CD4-positive, alpha-beta T cell (primary cell): ENCODE measurements at regions of chr17 and their contacts with region 1.

Region 1: DNA sequence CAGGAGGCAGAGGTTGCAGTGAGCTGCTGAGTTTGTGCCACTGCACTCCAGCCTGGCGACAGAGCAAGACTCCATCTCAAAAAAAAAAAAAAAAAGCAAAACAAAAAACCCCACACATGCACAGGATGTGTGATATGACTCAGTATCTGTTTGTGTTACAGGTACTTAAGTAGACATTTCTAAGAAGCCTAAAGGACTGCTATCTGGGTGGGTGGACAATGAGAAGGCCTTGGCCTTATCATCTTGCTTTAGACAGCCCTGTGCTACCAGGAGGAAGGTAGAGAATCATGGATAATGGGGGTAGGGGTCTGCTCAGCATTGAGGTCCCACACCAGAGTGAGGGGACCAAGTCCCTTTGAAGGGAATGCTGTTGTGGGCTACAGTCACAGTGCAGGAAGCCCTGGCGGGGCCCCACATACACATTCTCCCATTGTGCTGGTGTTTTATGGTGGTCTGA is 26.7 kb downstream of the PLD6 start:
- DNase-seq: peak in 7 of 14 experiments; percentile 22 to 74 (median 51)
- ATAC-seq: peak; percentile 50
- H3K4me3 ChIP-seq: peak overlapping the region; percentile 36
- H3K4me3 Mint-ChIP-seq: peak overlapping the region; percentile 86
- H3K27ac ChIP-seq: peak overlapping the region; percentile 77
- H3K27ac Mint-ChIP-seq: peak overlapping the region; percentile 99
- H3K4me1 ChIP-seq: peaks cover 100% of the 10 kb centered on the region
- H3K4me1 Mint-ChIP-seq: peaks cover 91% of the 10 kb centered on the region
- H3K27me3 ChIP-seq: no peaks in the 10 kb centered on the region
- H3K27me3 Mint-ChIP-seq: no peaks in the 10 kb centered on the region
- CTCF ChIP-seq: no peak

Region 2: GRCh38 chr17:17151962-17152361 is 27.4 kb before region 1 on chr17:
- CTCF ChIA-PET with region 1: no interaction called
- POLR2A ChIA-PET with region 1: interaction called, 10 read pairs
- intact Hi-C with region 1: no loop called
- DNase-seq: peak in 5 of 14 experiments; percentile 15 to 64 (median 49)
- ATAC-seq: no peak
- H3K4me3 ChIP-seq: no peak overlapping the region
- H3K4me3 Mint-ChIP-seq: no peak overlapping the region
- H3K27ac ChIP-seq: no peak overlapping the region
- H3K27ac Mint-ChIP-seq: peak overlapping the region; percentile 81
- H3K4me1 ChIP-seq: peaks cover 54% of the 10 kb centered on the region
- H3K4me1 Mint-ChIP-seq: peaks cover 48% of the 10 kb centered on the region
- H3K27me3 ChIP-seq: no peaks in the 10 kb centered on the region
- H3K27me3 Mint-ChIP-seq: no peaks in the 10 kb centered on the region
- CTCF ChIP-seq: no peak

Region 3: GRCh38 chr17:17191346-17191792 is 12.0 kb after region 1 on chr17:
- CTCF ChIA-PET with region 1: no interaction called
- POLR2A ChIA-PET with region 1: interaction called, 13 read pairs
- intact Hi-C with region 1: no loop called
- DNase-seq: no peak
- ATAC-seq: no peak
- H3K4me3 ChIP-seq: no peak overlapping the region
- H3K4me3 Mint-ChIP-seq: no peak overlapping the region
- H3K27ac ChIP-seq: no peak overlapping the region
- H3K27ac Mint-ChIP-seq: no peak overlapping the region
- H3K4me1 ChIP-seq: peaks cover 22% of the 10 kb centered on the region
- H3K4me1 Mint-ChIP-seq: peaks cover 13% of the 10 kb centered on the region
- H3K27me3 ChIP-seq: no peaks in the 10 kb centered on the region
- H3K27me3 Mint-ChIP-seq: no peaks in the 10 kb centered on the region
- CTCF ChIP-seq: no peak

Region 4: DNA sequence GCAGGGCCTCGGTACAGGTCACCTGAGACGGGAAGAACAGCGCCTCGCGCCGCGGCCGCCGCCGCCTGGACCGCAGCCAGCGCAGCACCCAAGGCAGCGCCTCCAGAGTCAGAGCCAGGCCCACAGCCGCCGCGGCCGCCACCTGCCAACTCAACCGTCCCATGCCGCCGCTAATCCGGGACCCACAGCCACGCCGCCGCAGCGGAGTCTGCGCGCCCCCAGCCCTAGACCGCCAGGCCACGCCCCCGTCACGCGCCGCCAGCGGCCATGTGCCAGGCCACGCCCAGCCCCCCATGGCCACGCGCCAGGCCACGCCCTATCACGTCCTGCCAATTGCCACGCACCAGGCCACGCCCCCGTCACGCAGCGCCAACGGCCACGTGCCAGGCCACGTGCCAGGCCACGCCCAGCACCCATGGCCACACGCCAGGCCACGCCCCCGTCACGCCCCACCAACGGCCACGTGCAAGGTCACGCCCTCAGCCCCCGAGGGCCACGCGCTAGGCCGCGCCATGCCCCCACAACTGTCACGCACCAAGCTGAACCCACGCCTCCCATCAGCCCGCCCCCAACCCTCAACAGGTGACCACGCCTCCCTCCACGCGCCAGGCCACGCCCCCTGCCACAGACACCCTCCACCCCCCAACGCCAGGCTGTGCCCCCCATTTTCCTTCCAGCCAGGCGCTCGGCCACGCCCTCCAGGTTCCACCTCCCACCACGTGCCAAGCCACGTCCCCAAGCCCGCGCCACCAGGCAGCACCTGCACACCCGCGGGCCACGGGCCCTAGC is 26.9 kb after region 1 on chr17 and contains the start of gene PLD6:
- CTCF ChIA-PET with region 1: interaction called, 3 read pairs
- POLR2A ChIA-PET with region 1: interaction called, 17 read pairs
- intact Hi-C with region 1: loop called (anchors 1 to 2 kb)
- DNase-seq: peak; percentile 85 to 97 (median 90)
- ATAC-seq: peak; percentile 73
- H3K4me3 ChIP-seq: peak within 1 kb of the TSS; percentile 84
- H3K4me3 Mint-ChIP-seq: peak within 1 kb of the TSS; percentile 93
- H3K27ac ChIP-seq: peak within 1 kb of the TSS; percentile 45 to 53
- H3K27ac Mint-ChIP-seq: peak within 1 kb of the TSS; percentile 92
- H3K4me1 ChIP-seq: peaks cover 34% of the 10 kb centered on the region
- H3K4me1 Mint-ChIP-seq: peaks cover 24% of the 10 kb centered on the region
- H3K27me3 ChIP-seq: no peaks in the 10 kb centered on the region
- H3K27me3 Mint-ChIP-seq: no peaks in the 10 kb centered on the region
- CTCF ChIP-seq: no peak
- total RNA-seq, gene PLD6: 7.1 to 7.5 TPM

Region 5: GRCh38 chr17:17216776-17217175 is 37.4 kb after region 1 on chr17:
- CTCF ChIA-PET with region 1: no interaction called
- POLR2A ChIA-PET with region 1: interaction called, 3 read pairs
- intact Hi-C with region 1: loop called in 1 of 2 experiments (anchors 5 kb)
- DNase-seq: no peak
- ATAC-seq: no peak
- H3K4me3 ChIP-seq: no peak overlapping the region
- H3K4me3 Mint-ChIP-seq: no peak overlapping the region
- H3K27ac ChIP-seq: no peak overlapping the region
- H3K27ac Mint-ChIP-seq: no peak overlapping the region
- H3K4me1 ChIP-seq: no peaks in the 10 kb centered on the region
- H3K4me1 Mint-ChIP-seq: no peaks in the 10 kb centered on the region
- H3K27me3 ChIP-seq: no peaks in the 10 kb centered on the region
- H3K27me3 Mint-ChIP-seq: no peaks in the 10 kb centered on the region
- CTCF ChIP-seq: no peak

Region 6: GRCh38 chr17:17237026-17237799 is 57.8 kb after region 1 on chr17 and contains the start of gene FLCN:
- CTCF ChIA-PET with region 1: no interaction called
- POLR2A ChIA-PET with region 1: interaction called, 8 read pairs
- intact Hi-C with region 1: loop called (anchors 2 kb)
- DNase-seq: peak; percentile 78 to 95 (median 87)
- ATAC-seq: peak; percentile 91
- H3K4me3 ChIP-seq: peak within 1 kb of the TSS; percentile 99
- H3K4me3 Mint-ChIP-seq: peak within 1 kb of the TSS; percentile 96
- H3K27ac ChIP-seq: peak within 1 kb of the TSS; percentile 85 to 91
- H3K27ac Mint-ChIP-seq: peak within 1 kb of the TSS; percentile 98
- H3K4me1 ChIP-seq: peaks cover 26% of the 10 kb centered on the region
- H3K4me1 Mint-ChIP-seq: peaks cover 33% of the 10 kb centered on the region
- H3K27me3 ChIP-seq: no peaks in the 10 kb centered on the region
- H3K27me3 Mint-ChIP-seq: no peaks in the 10 kb centered on the region
- CTCF ChIP-seq: no peak
- total RNA-seq, gene FLCN: 12.1 to 15.9 TPM